Gastrocnemius medialis (tissue), 4 donors: ENCODE measurements at regions of chr10 and their contacts with region 1.

Region 1: DNA sequence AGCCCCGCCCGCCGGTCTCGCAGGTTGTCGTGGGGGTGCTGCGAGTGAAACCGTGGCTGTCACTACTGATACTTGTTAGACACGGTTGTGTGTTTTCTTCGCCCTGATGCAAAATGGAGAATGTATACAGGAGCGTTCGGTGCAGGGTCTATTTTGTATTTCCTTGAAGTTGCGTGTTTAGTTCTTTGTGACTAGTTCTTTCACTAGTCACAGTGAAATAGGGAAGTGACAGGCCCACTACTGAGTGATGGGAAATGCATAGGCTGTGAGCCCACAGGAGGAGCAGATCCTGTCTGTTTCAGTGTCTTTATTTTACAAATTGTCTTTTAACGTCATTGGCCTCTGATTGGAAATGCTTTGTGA is 675 bp downstream of the ABRAXAS2 start:
- DNase-seq: no peak
- ATAC-seq: peak; percentile 2 to 8
- H3K4me3 ChIP-seq: peak overlapping the region; percentile 79 to 99 (median 93)
- H3K27ac ChIP-seq: peak overlapping the region; percentile 88 to 92 (median 90)
- H3K4me1 ChIP-seq: peaks cover 23 to 39% of the 10 kb centered on the region in 2 donors
- H3K27me3 ChIP-seq: no peaks in the 10 kb centered on the region
- CTCF ChIP-seq: no peak
- POLR2A ChIP-seq: no peak

Region 2: DNA sequence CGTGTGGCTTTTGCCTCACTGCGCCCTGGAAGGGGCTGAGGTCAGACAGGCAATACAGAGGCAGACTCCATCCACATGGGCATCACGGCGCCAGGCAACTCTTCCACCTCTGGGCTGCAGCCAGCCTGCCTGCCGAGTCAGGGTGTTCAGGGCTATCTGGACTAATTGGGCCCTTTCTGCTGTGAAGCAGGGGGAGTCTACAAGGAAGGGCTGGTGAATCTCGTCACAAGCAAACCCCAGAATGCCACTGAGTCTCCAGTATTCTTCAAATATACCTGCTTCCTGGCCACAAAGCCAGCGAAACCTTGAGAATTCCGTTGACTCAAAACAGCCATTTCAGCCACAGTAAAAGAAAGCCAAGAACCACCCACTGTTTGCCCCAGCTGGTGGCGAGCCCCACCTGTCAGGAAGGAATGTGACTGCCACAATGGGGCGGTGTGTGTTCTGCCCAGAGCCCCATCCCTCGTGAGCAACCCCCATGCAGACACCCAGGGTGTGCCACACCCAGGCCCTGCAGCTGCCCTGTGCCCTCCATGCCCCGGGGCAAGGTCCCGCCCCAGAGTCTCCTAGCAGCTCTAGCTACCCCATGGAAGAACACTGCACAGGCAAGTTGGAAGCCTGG is 175.4 kb before region 1 on chr10:
- in situ Hi-C with region 1: no loop called
- intact Hi-C with region 1: loop called (anchors 10 kb)
- DNase-seq: no peak
- ATAC-seq: no peak
- H3K4me3 ChIP-seq: no peak overlapping the region
- H3K27ac ChIP-seq: peak overlapping the region; percentile 65 to 88 (median 77)
- H3K4me1 ChIP-seq: peaks cover 88 to 91% of the 10 kb centered on the region in 2 donors
- H3K27me3 ChIP-seq: no peaks in the 10 kb centered on the region
- CTCF ChIP-seq: no peak
- POLR2A ChIP-seq: no peak

Region 3: DNA sequence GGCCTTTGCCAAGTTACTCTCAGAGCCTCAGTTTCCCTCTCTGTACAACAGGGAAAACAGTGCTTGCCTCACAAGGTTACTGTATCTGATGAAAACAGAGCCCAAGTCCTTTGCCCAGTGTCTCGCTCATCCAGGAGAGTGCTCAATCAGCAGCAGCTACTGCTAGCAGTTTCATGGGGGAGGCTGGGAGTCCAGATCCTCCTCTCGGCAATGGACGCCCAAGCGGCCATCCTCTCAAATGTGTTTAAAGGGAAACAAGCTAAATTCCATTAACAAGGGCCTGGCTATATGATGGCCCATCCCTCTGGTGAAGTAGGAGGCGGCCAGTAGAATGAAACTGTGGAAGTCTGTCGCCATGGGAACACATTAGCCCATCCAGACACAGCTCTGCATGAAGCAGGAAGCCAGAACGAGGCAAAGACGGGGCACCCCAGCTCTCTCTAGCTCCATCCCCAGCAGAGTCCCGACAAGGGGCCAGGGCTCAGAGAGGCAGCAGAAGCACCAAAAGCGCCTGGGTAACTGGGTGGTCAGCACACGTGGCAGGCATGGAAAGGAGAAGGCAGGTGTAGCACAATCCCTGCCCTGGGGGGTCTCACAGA is 93.3 kb before region 1 on chr10:
- in situ Hi-C with region 1: no loop called
- intact Hi-C with region 1: no loop called
- DNase-seq: no peak
- ATAC-seq: no peak
- H3K4me3 ChIP-seq: no peak overlapping the region
- H3K27ac ChIP-seq: peak overlapping the region; percentile 93 to 98 (median 96)
- H3K4me1 ChIP-seq: peaks cover 75 to 90% of the 10 kb centered on the region in 2 donors
- H3K27me3 ChIP-seq: no peaks in the 10 kb centered on the region
- CTCF ChIP-seq: no peak
- POLR2A ChIP-seq: no peak